ENCODE measurements at regions of chr18 and their contacts with region 1.

Region 1: GRCh38 chr18:54119524-54120019 is 104.9 kb downstream of the MBD2 start:
- DNase-seq: no peak
- ATAC-seq: peak; percentile 72 to 76
- H3K4me3 ChIP-seq: no peak overlapping the region
- H3K27ac ChIP-seq: no peak overlapping the region
- H3K4me1 ChIP-seq: no peaks in the 10 kb centered on the region
- H3K27me3 ChIP-seq: no peaks in the 10 kb centered on the region

Region 2: DNA sequence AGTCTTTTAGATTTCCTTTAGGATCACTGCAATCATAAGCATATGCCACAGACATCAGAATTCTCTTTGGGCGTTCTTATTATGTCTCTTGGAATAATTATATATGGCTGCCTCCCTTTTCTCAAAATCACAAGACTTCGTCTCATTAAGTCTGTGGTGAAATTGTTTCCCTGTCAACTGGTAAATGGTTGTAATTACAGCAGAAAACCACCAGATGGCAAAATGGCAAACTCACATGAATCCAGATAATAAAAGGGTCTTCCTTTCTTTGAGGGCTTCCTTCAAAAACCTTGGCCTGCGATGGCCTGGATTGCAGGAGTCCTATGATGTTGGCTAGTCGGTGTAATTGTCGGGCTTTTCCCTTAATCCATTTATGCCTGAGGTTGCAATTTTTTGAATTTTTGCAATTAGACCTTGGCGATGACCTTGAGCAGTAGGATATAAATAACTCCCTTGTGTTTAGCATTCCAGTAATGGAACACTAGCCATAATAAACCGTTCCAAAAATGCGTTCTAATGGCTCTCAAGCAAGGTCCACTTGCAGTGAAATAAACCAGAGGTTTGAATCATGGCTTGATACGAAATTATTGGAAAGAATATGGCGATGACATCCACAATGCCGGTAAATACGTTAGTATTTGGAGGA is 551.5 kb before region 1 on chr18:
- intact Hi-C with region 1: loop called in 2 of 4 experiments (anchors 5 kb)
- DNase-seq: peak in 1 of 3 donors; percentile 22
- ATAC-seq: no peak
- H3K4me3 ChIP-seq: no peak overlapping the region
- H3K27ac ChIP-seq: no peak overlapping the region
- H3K4me1 ChIP-seq: no peaks in the 10 kb centered on the region
- H3K27me3 ChIP-seq: no peaks in the 10 kb centered on the region

Region 3: GRCh38 chr18:53698907-53699306 is 420.7 kb before region 1 on chr18:
- intact Hi-C with region 1: loop called in 1 of 4 experiments (anchors 5 kb)
- DNase-seq: peak in 1 of 3 donors; percentile 25
- ATAC-seq: peak; percentile 45 to 60
- H3K4me3 ChIP-seq: no peak overlapping the region
- H3K27ac ChIP-seq: no peak overlapping the region
- H3K4me1 ChIP-seq: no peaks in the 10 kb centered on the region
- H3K27me3 ChIP-seq: no peaks in the 10 kb centered on the region

Measured in right cardiac atrium (tissue), 5 donors.